ENCODE measurements at regions of chr10 and their contacts with region 1.

Region 1: GRCh38 chr10:9331583-9332008 is 1277.1 kb downstream of the GATA3 start:
- DNase-seq: peak; percentile 56
- H3K4me3 ChIP-seq: no peak overlapping the region; a peak in 1 of 4 replicates
- H3K27ac ChIP-seq: no peak overlapping the region
- H3K4me1 ChIP-seq: no peaks in the 10 kb centered on the region
- H3K27me3 ChIP-seq: no peaks in the 10 kb centered on the region
- CTCF ChIP-seq: peak; percentile 92
- EP300 ChIP-seq: no peak
- RAD21 ChIP-seq: peak; percentile 80

Region 2: GRCh38 chr10:9311702-9312499 is 19.7 kb before region 1 on chr10:
- CTCF ChIA-PET with region 1: interaction called, 13 read pairs
- POLR2A ChIA-PET with region 1: no interaction called
- DNase-seq: no peak
- H3K4me3 ChIP-seq: no peak overlapping the region
- H3K27ac ChIP-seq: no peak overlapping the region
- H3K4me1 ChIP-seq: no peaks in the 10 kb centered on the region
- H3K27me3 ChIP-seq: no peaks in the 10 kb centered on the region
- CTCF ChIP-seq: peak; percentile 45
- EP300 ChIP-seq: no peak
- RAD21 ChIP-seq: no peak

Region 3: GRCh38 chr10:9342885-9343570 is 11.4 kb after region 1 on chr10:
- CTCF ChIA-PET with region 1: interaction called, 53 read pairs
- POLR2A ChIA-PET with region 1: no interaction called
- DNase-seq: peak; percentile 31
- H3K4me3 ChIP-seq: no peak overlapping the region; a peak in 1 of 4 replicates
- H3K27ac ChIP-seq: no peak overlapping the region
- H3K4me1 ChIP-seq: no peaks in the 10 kb centered on the region
- H3K27me3 ChIP-seq: no peaks in the 10 kb centered on the region
- CTCF ChIP-seq: peak; percentile 76
- EP300 ChIP-seq: no peak
- RAD21 ChIP-seq: peak; percentile 79

Region 4: GRCh38 chr10:9608602-9609001 is 277.0 kb after region 1 on chr10:
- CTCF ChIA-PET with region 1: no interaction called
- POLR2A ChIA-PET with region 1: no interaction called
- DNase-seq: no peak
- H3K4me3 ChIP-seq: no peak overlapping the region
- H3K27ac ChIP-seq: no peak overlapping the region
- H3K4me1 ChIP-seq: no peaks in the 10 kb centered on the region
- H3K27me3 ChIP-seq: no peaks in the 10 kb centered on the region
- CTCF ChIP-seq: peak; percentile 24; the same call in 1 of the 2 replicates
- EP300 ChIP-seq: no peak
- RAD21 ChIP-seq: peak; percentile 51

Region 5: DNA sequence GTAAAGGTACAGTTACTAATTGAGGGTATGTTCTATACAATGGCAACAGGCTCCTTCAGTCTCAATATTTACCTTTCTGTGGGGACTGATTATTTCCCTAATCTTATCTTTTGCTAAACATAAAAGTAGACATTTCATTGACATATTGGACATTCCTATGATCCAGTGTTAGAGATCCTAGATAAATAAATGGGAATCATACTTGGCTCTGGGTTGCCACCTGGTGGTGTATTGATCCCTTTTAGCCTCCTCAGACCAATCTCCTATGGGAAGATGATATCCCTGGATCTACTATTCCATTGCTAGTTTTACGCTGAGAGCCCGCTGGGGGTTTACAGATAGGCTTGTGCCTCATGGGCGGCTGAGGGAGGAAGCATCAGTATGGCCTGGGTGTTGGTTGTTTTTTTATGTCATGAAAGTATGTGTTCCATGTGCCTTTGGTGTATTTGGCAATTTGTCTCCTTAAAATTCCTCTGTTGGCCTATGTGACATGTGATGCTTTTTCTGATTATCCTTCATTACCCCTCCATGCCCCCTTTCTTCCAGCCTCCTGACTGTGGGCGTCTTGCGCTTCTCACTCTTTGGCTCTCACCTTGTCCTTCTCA is 1704.9 kb after region 1 on chr10:
- CTCF ChIA-PET with region 1: interaction called, 18 read pairs
- POLR2A ChIA-PET with region 1: no interaction called
- DNase-seq: peak; percentile 55
- H3K4me3 ChIP-seq: peak overlapping the region in 1 of 2 experiments; percentile 24; a peak in 1 of 4 replicates
- H3K27ac ChIP-seq: no peak overlapping the region
- H3K4me1 ChIP-seq: no peaks in the 10 kb centered on the region
- H3K27me3 ChIP-seq: no peaks in the 10 kb centered on the region
- CTCF ChIP-seq: peak; percentile 38
- EP300 ChIP-seq: no peak
- RAD21 ChIP-seq: peak; percentile 63

Measured in SK-N-SH (cell line).